SK-N-SH (cell line): ENCODE measurements at regions of chr1 and their contacts with region 1.

Region 1: GRCh38 chr1:175154629-175155472 is 37.7 kb downstream of the KIAA0040 start:
- DNase-seq: peak; percentile 62
- H3K4me3 ChIP-seq: no peak overlapping the region; a peak in 1 of 4 replicates
- H3K27ac ChIP-seq: no peak overlapping the region
- H3K4me1 ChIP-seq: no peaks in the 10 kb centered on the region
- H3K27me3 ChIP-seq: 0 out of 2 replicates have a peak, but pooled peaks cover 10% of the 10 kb centered on the region
- CTCF ChIP-seq: peak; percentile 86
- EP300 ChIP-seq: no peak
- RAD21 ChIP-seq: peak; percentile 87

Region 2: GRCh38 chr1:175042650-175043049 is 112.2 kb before region 1 on chr1:
- CTCF ChIA-PET with region 1: no interaction called
- POLR2A ChIA-PET with region 1: no interaction called
- DNase-seq: no peak
- H3K4me3 ChIP-seq: no peak overlapping the region
- H3K27ac ChIP-seq: no peak overlapping the region
- H3K4me1 ChIP-seq: no peaks in the 10 kb centered on the region
- H3K27me3 ChIP-seq: no peaks in the 10 kb centered on the region
- CTCF ChIP-seq: no peak
- EP300 ChIP-seq: no peak
- RAD21 ChIP-seq: no peak

Region 3: GRCh38 chr1:175118375-175119367 is 36.2 kb before region 1 on chr1:
- CTCF ChIA-PET with region 1: interaction called, 12 read pairs
- POLR2A ChIA-PET with region 1: no interaction called
- DNase-seq: no peak
- H3K4me3 ChIP-seq: no peak overlapping the region
- H3K27ac ChIP-seq: no peak overlapping the region
- H3K4me1 ChIP-seq: no peaks in the 10 kb centered on the region
- H3K27me3 ChIP-seq: no peaks in the 10 kb centered on the region
- CTCF ChIP-seq: no peak
- EP300 ChIP-seq: no peak
- RAD21 ChIP-seq: no peak

Region 4: DNA sequence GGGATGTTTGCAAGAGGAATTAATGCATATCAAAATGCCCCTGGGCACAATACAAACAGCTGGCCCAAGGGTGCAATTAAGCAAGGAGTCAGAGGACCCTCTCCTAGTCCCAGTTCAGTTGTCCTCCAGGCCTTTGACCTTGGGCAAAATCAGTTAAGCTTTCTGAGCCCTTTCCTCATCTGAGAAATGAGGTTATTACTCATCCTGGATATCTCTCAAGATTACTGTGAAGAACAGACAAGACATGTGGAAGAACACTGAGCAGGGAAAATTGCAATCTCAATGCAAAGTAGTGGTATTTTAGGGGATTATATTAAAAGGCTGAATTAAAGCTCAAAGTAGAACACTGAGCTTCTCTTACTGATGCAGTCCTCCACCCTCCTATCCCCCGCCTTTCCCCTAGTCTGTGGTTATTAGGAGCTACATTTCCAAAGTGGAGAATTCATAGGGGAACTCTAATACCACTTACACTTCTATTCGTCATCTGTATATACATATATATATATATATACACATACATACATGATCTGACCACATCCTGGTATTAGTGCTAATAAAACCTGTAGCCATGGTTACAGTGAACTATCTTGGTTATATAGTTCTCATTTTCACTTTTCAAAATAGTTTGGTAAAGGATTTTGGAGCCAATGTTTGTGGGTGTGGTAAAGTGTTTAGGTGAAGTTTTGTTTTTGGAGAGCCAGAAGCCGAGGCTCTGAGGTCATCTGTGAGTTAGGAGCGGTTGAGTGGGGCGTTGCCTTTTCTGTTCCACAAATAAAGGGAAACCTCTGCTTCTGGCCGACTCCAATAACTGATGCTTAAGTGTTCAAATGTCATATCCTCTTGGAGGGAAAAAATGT is 19.7 kb after region 1 on chr1:
- CTCF ChIA-PET with region 1: interaction called, 14 read pairs
- POLR2A ChIA-PET with region 1: no interaction called
- DNase-seq: no peak
- H3K4me3 ChIP-seq: no peak overlapping the region
- H3K27ac ChIP-seq: no peak overlapping the region
- H3K4me1 ChIP-seq: peaks cover 0 to 2% of the 10 kb centered on the region in 2 experiments; a peak in 1 of 4 replicates
- H3K27me3 ChIP-seq: no peaks in the 10 kb centered on the region
- CTCF ChIP-seq: no peak
- EP300 ChIP-seq: no peak
- RAD21 ChIP-seq: no peak

Region 5: GRCh38 chr1:175308828-175309227 is 154.0 kb after region 1 on chr1:
- CTCF ChIA-PET with region 1: interaction called, 281 read pairs
- POLR2A ChIA-PET with region 1: no interaction called
- DNase-seq: no peak
- H3K4me3 ChIP-seq: no peak overlapping the region
- H3K27ac ChIP-seq: no peak overlapping the region
- H3K4me1 ChIP-seq: peaks cover 0 to 1% of the 10 kb centered on the region in 2 experiments; a peak in 1 of 4 replicates
- H3K27me3 ChIP-seq: no peaks in the 10 kb centered on the region
- CTCF ChIP-seq: no peak
- EP300 ChIP-seq: no peak
- RAD21 ChIP-seq: no peak

Region 6: DNA sequence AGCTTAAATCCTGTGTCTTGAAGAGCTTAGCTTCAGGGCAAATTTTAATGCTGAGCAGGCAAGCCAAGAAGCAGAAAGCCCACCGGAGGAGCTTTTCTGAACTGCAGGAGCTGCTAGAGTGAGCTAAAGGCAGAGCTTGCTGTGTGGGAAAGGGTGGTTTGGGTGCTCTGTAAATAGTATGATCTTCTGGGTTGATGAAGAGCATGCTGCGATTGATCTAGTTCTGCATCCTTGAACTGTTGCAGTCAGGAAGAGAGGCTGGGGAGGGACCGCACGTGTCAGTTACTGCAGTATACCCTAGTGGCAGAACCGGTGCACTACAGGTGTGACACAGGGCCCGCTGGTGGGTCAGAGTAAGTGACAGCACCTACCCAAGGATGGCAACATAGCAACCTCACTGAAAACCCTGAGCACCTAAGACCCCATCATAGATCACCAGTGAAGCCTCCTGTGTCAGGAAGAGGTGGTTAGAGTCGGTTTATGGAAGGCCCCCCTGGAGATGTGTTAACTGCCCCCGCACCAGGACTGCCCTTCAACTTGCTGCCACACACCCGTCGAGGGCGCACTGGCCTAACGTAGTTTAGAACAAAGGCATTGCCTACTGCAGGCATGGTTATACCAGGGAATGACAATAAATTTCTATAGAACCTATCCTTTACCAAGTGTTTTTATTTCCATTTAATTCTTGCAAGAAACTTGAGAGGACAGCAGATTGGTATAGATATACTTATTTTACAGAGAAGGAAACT is 183.7 kb after region 1 on chr1:
- CTCF ChIA-PET with region 1: interaction called, 24 read pairs
- POLR2A ChIA-PET with region 1: no interaction called
- DNase-seq: peak; percentile 41
- H3K4me3 ChIP-seq: no peak overlapping the region
- H3K27ac ChIP-seq: no peak overlapping the region
- H3K4me1 ChIP-seq: peaks cover 0 to 4% of the 10 kb centered on the region in 2 experiments; a peak in 2 of 4 replicates
- H3K27me3 ChIP-seq: no peaks in the 10 kb centered on the region
- CTCF ChIP-seq: no peak
- EP300 ChIP-seq: no peak
- RAD21 ChIP-seq: 0 out of 2 replicates have a peak, but pooled peaks have one; percentile 3